ENCODE measurements at regions of chr9 and their contacts with region 1.

Region 1: DNA sequence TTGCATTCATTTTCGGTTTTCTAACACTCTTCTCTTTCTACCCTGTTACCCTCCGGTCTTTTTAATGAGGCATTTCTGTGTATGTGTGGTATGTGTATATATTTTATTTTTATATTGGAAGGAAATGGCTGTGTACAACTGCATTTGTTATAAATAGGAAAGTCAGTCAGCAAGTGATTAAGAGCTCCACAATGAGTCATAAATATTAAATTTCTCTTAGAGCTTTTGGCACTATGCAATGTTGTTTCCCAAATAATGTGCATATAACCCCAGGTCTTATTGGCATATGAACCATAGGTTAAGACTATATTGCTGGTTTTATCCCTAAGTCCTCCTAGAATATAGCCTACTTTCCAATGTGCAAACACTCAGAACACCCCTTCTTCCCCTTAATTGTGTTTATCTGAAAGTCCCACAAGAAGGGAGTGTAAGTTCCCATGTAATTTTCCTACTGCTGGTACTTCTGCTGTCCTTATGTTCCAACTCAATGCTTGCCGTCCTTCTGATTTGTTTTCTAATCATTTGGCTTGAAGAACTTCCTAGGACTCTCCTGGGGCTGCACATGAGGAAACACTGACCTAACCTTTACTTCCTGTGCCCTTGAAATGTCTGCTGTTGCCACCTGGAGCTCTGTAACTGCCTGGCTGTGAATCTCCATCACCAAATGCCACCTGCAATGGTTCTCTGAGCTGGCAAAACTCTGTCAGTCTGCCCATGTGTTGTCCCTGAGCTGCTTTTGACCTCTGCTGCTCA is 65.5 kb upstream of the PCSK5 start:
- DNase-seq: no peak
- H3K4me3 ChIP-seq: no peak overlapping the region
- H3K27ac ChIP-seq: peak overlapping the region; percentile 75 to 77
- H3K4me1 ChIP-seq: peaks cover 3 to 40% of the 10 kb centered on the region in 2 donors
- H3K27me3 ChIP-seq: no peaks in the 10 kb centered on the region
- CTCF ChIP-seq: no peak

Region 2: GRCh38 chr9:75644649-75645048 is 180.3 kb before region 1 on chr9:
- intact Hi-C with region 1: loop called (anchors 5 kb)
- DNase-seq: no peak
- H3K4me3 ChIP-seq: no peak overlapping the region
- H3K27ac ChIP-seq: no peak overlapping the region
- H3K4me1 ChIP-seq: peaks cover 0 to 10% of the 10 kb centered on the region in 2 donors
- H3K27me3 ChIP-seq: no peaks in the 10 kb centered on the region
- CTCF ChIP-seq: no peak